Mammary epithelial cell (primary cell): ENCODE measurements at regions of chr11 and their contacts with region 1.

Region 1: DNA sequence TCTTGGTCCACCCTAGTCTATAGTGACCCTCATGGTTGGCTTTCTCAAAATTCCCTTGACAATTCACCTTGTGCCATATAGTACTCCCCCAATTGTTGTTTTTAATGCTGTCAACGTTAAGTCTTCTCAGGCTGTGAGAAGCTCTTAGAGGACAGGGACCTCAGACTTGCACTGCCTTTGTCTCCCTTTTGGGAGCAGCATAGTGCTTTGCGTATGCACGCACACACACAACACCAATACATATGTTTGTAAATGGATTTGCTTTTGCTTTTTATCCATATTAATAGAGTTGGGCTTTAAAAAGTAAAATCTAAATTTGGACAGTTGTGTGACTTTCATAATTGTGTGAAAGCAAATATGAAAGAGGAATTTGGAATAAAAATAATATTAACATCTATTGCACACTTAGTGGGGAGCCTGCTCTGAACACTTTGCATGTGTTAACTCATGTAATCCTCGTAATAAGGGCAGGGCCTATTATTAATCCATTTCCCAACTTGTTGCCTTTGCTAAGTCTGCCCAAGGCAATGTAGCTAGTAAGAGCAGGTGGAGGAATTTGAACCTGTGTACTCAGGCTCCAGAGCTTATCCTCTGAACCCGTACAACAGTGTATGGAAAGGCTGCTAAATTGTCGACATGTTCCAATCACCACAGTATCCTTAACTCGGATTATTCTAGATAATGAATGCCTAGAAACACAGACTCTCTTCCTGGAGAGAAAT is 257.7 kb upstream of the NARS2 start:
- DNase-seq: no peak
- H3K4me3 ChIP-seq: no peak overlapping the region
- H3K27ac ChIP-seq: no peak overlapping the region
- H3K4me1 ChIP-seq: peaks cover 4% of the 10 kb centered on the region
- H3K27me3 ChIP-seq: no peaks in the 10 kb centered on the region
- CTCF ChIP-seq: peak in 1 of 2 donors; percentile 23

Region 2: GRCh38 chr11:78742430-78742829 is 90.0 kb before region 1 on chr11:
- CTCF ChIA-PET with region 1: no interaction called
- dilution Hi-C with region 1: no loop called
- in situ Hi-C with region 1: no loop called
- intact Hi-C with region 1: no loop called
- DNase-seq: peak; percentile 54
- H3K4me3 ChIP-seq: no peak overlapping the region
- H3K27ac ChIP-seq: no peak overlapping the region
- H3K4me1 ChIP-seq: peaks cover 9% of the 10 kb centered on the region
- H3K27me3 ChIP-seq: no peaks in the 10 kb centered on the region
- CTCF ChIP-seq: peak in 1 of 2 donors; percentile 30

Region 3: DNA sequence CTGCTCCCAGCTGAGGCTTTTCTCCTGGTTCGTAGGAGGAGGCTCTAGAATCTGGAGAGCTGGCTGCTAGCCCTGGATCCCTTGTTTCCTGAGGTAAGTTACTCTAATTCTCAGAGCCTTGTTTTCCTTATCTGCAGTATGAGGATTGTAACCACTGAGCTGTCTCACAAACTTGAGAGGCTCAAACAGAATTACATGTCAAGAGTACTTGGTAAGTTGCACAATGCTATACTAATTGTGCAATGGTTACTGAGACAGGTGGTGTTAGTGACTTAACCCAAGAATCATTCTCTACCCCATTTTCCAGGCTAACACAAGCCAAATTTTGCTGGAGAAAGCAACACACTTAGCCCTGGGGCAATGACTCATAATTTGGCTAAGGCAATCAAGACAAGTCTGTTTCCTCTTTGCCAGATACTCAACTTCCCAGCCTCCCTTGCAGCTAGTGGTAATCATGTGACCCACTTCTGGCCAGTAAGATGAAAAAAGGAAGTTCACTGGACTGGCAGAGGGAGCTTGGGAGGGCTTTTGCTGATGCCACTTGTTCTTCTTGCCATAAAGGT is 260.5 kb after region 1 on chr11:
- CTCF ChIA-PET with region 1: no interaction called
- dilution Hi-C with region 1: no loop called
- in situ Hi-C with region 1: no loop called
- intact Hi-C with region 1: loop called (anchors 10 kb)
- DNase-seq: peak; percentile 100
- H3K4me3 ChIP-seq: no peak overlapping the region
- H3K27ac ChIP-seq: no peak overlapping the region
- H3K4me1 ChIP-seq: peaks cover 17% of the 10 kb centered on the region
- H3K27me3 ChIP-seq: no peaks in the 10 kb centered on the region
- CTCF ChIP-seq: no peak